OCI-LY7 (cell line): ENCODE measurements at regions of chr1 and their contacts with region 1.

Region 1: GRCh38 chr1:192808518-192809306 is at the start of gene RGS2:
- DNase-seq: peak; percentile 94
- H3K4me3 ChIP-seq: peak within 1 kb of the TSS; percentile 81
- H3K27ac ChIP-seq: peak within 1 kb of the TSS; percentile 56
- H3K4me1 ChIP-seq: peaks cover 36% of the 10 kb centered on the region
- CTCF ChIP-seq: peak; percentile 26; the same call in 1 of the 2 replicates
- total RNA-seq, gene RGS2: 26.5 and 27.6 TPM in 2 replicates

Region 2: DNA sequence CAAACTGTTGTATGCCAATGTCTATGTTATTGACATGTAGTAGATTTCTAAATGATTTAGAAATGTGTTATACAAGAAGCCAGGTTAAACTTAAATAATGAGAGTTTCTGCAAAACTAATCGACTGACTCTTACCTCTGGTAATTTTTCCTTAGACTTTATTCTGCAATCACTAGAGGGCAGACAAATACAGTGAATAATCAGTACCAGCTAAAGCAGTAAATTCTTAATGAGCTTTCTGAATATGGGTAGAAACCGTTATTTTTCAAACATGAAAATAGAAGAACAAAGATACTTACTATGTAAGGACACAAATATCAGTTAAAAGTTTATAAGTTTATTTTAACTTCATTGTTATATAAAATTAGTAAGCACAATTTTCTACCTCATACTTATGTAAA is 331.1 kb before region 1 on chr1:
- CTCF ChIA-PET with region 1: interaction called, 3 read pairs
- POLR2A ChIA-PET with region 1: interaction called, 9 read pairs
- intact Hi-C with region 1: loop called (anchors 2 kb)
- DNase-seq: peak; percentile 58
- H3K4me3 ChIP-seq: no peak overlapping the region
- H3K27ac ChIP-seq: no peak overlapping the region
- H3K4me1 ChIP-seq: no peaks in the 10 kb centered on the region
- CTCF ChIP-seq: peak; percentile 90

Region 3: GRCh38 chr1:192615055-192615454 is 193.7 kb before region 1 on chr1:
- CTCF ChIA-PET with region 1: interaction called, 4 read pairs
- POLR2A ChIA-PET with region 1: interaction called, 12 read pairs
- intact Hi-C with region 1: loop called (anchors 2 kb)
- DNase-seq: peak; percentile 47
- H3K4me3 ChIP-seq: no peak overlapping the region
- H3K27ac ChIP-seq: no peak overlapping the region
- H3K4me1 ChIP-seq: peaks cover 47% of the 10 kb centered on the region
- CTCF ChIP-seq: no peak

Region 4: DNA sequence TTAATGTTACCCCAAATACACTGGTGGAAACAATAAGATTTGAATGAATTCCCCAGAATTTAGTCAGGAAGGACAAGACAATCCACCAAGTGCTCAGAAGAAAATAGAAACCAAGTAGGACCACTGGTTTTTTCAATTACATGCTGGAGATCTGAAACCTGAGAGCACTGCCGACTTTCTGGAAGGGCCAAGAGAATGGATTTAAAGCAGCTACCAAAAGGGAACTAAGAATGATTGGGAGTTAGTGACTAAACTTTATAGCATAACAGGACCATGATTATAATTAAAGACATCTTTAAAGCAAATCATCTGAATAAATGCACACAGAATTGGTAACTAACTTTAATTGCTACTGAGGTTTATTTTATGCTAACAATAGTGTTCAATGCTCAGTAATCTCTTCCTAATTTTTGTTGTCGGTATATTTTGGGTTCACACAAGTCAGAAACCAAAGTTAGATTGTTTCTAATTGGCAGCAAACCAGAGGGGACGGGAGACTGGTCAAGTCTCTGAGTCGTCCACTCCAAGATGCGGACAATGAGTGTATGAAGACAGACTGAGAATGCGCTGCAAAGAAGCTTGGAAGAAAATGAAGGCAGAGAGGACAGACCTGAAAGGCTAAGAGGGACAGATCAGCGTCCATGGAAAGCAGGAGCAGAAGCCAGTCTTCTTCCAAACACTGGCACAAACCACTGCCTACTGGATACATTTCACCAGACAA is 175.0 kb before region 1 on chr1:
- CTCF ChIA-PET with region 1: no interaction called
- POLR2A ChIA-PET with region 1: interaction called, 11 read pairs
- intact Hi-C with region 1: loop called (anchors 2 kb)
- DNase-seq: no peak
- H3K4me3 ChIP-seq: peak overlapping the region; percentile 80
- H3K27ac ChIP-seq: peak overlapping the region; percentile 100
- H3K4me1 ChIP-seq: peaks cover 66% of the 10 kb centered on the region
- CTCF ChIP-seq: no peak

Region 5: GRCh38 chr1:193059268-193060225 is 250.8 kb after region 1 on chr1 and contains the starts of genes RO60 and UCHL5:
- CTCF ChIA-PET with region 1: no interaction called
- POLR2A ChIA-PET with region 1: interaction called, 8 read pairs
- intact Hi-C with region 1: loop called (anchors 2 kb)
- DNase-seq: peak; percentile 97
- H3K4me3 ChIP-seq: peak within 1 kb of the TSS; percentile 100
- H3K27ac ChIP-seq: peak within 1 kb of the TSS; percentile 82
- H3K4me1 ChIP-seq: peaks cover 39% of the 10 kb centered on the region
- CTCF ChIP-seq: no peak
- total RNA-seq, gene RO60: 70.4 and 72.4 TPM in 2 replicates
- total RNA-seq, gene UCHL5: 28.6 and 32.7 TPM in 2 replicates

Region 6: DNA sequence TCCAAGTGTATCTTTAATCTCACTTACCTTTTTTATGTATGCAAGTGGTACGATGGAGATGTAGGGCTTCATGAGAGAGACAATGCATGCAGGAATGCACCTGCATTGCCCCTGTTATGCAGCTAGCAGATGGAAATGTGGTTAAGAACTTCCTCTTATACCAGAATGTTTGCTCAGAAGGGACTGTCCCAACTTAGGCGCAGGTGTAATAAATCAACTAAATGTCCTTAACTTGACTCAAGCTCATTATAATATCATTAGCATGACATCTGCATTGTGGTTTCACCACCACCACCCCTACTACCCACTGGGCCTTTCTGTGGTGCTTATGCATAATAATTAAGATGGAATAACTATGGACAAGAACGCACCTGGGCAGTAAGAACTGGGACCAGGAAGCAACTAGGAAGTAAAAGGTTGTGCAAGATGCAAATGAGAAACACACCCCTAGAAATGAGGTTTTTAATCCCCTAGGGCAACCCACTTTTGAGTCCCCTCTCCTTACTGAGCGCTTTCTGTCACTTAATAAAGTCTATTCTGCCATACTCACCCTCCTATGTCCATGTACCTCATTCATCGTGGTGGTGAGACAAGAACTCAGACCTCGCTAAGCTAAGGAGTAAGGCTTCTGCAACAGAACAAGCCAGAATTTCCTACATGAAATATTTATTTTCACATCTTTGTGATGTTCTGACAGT is 1481.0 kb after region 1 on chr1:
- CTCF ChIA-PET with region 1: no interaction called
- POLR2A ChIA-PET with region 1: interaction called, 4 read pairs
- intact Hi-C with region 1: loop called (anchors 5 kb)
- DNase-seq: peak; percentile 98
- H3K4me3 ChIP-seq: peak overlapping the region; percentile 73
- H3K27ac ChIP-seq: peak overlapping the region; percentile 96
- H3K4me1 ChIP-seq: peaks cover 48% of the 10 kb centered on the region
- CTCF ChIP-seq: no peak